ENCODE measurements at regions of chr12 and their contacts with region 1.

Region 1: GRCh38 chr12:101830367-101831325 is at the start of gene GNPTAB:
- DNase-seq: peak; percentile 95 to 98 (median 96)
- ATAC-seq: peak; percentile 98
- H3K4me3 ChIP-seq: peak within 1 kb of the TSS; percentile 81
- H3K4me1 ChIP-seq: peaks cover 5% of the 10 kb centered on the region
- CTCF ChIP-seq: peak; percentile 80
- total RNA-seq, gene GNPTAB: 62.9 to 104 (median 88.9) TPM

Region 2: DNA sequence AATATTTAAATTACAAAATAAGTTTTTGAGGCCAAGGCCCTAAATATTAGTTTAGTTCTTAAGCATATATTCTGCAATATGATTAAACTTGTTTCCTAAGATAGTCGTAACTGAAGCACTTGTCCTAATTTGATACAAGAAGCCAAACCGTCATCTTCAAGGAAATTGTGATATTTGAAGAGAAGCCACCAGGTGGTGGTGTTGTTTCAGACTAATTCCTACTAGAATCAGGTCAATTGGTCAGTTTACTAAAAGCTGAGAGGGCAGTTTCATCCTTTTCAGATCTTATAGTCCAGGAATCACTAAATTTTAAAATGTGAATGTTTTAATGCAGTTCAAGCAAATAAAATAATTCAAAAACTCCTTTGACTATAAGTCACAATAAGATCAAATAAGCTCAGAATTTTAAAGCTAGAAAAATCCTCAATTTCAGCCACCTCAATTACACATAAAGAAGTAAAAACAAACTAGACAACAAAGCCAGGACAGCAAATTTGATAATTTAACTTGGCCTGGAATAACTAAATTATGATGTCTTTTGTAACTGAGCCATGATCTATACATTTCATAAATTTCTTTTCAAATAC is 416.0 kb before region 1 on chr12:
- intact Hi-C with region 1: loop called in 1 of 2 experiments (anchors 10 kb)
- DNase-seq: peak in 1 of 3 donors; percentile 80
- ATAC-seq: peak; percentile 44
- H3K4me3 ChIP-seq: no peak overlapping the region
- H3K4me1 ChIP-seq: no peaks in the 10 kb centered on the region
- CTCF ChIP-seq: no peak

Region 3: DNA sequence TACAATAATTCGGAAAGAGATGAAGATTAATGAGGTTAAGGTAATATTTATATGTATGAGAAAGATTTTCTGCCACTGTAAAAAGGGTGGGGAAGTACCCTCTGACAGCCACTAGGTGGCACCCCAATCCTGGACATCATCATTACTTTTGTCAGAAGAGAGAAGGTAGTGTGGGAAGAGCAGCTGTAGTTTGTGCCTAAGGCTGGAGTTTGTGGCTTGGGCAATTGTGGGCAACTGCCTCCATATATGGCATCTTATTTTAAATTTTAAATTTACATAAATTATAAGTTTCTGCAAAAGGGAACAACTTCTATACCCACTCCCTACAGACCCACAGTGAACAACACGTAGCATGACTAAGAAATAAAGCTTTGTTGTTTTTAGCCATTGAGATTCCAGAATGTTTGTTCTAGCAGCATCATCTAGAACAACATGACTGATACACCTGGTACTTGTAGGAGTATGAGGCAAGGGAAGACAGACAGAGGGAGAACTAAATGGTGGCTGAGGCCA is 56.9 kb before region 1 on chr12:
- intact Hi-C with region 1: loop called (anchors 5 kb)
- DNase-seq: peak in 2 of 3 donors; percentile 47 to 66
- ATAC-seq: peak; percentile 93
- H3K4me3 ChIP-seq: no peak overlapping the region
- H3K4me1 ChIP-seq: peaks cover 7% of the 10 kb centered on the region
- CTCF ChIP-seq: peak; percentile 83

Region 4: DNA sequence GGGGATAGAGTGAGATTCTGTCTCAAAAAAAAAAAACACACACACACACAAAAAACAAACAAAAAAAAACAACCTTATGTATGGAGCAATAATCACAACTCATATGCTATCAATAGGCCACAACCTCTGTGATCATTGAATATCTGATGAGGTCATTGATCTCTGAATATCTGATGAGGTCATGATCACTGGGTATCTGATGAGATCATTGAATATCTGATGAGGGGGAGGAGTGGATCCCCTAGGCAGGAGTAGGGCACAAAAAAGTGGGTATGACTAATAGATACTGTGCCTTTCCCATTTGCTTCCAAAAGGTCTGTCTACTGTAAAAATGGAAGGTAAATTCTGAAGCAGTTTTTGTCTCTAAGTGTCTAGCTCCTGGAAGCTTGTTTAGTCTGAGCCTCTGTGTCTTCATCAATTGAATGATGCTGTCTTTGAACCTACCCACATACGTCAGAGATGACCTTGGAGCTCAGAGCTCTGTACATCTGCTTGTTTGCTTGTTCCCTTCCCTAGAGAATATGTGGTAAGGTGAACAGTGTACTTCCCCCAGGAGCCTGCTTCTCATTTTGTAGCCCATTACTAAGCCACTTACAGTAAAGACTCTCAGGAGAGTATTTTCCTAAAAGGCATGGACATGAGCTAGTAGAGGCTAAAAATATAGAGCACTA is 1072.8 kb after region 1 on chr12:
- intact Hi-C with region 1: no loop called
- DNase-seq: no peak
- ATAC-seq: no peak
- H3K4me3 ChIP-seq: no peak overlapping the region
- H3K4me1 ChIP-seq: no peaks in the 10 kb centered on the region
- CTCF ChIP-seq: no peak

Measured in mucosa of descending colon (tissue), 3 donors.